A549 (cell line): ENCODE measurements at regions of chr7 and their contacts with region 1.

Region 1: GRCh38 chr7:43700059-43700501 is 29.2 kb downstream of the COA1 start:
- DNase-seq: peak; percentile 28 to 56
- ATAC-seq: peak; percentile 78 to 80; a peak in 4 of 6 replicates
- H3K4me3 ChIP-seq: no peak overlapping the region
- H3K27ac ChIP-seq: no peak overlapping the region
- H3K4me1 ChIP-seq: peaks cover 42% of the 10 kb centered on the region
- CTCF ChIP-seq: peak; percentile 96
- EP300 ChIP-seq: no peak
- POLR2A ChIP-seq: no peak
- RAD21 ChIP-seq: peak; percentile 93 to 96

Region 2: GRCh38 chr7:43625453-43625852 is 74.6 kb before region 1 on chr7:
- CTCF ChIA-PET with region 1: interaction called, 26 read pairs
- POLR2A ChIA-PET with region 1: no interaction called
- DNase-seq: no peak
- ATAC-seq: peak in 1 of 2 experiments; percentile 16; a peak in 2 of 6 replicates
- H3K4me3 ChIP-seq: no peak overlapping the region
- H3K27ac ChIP-seq: no peak overlapping the region
- H3K4me1 ChIP-seq: peaks cover 4% of the 10 kb centered on the region; the same call in 2 of the 3 replicates
- CTCF ChIP-seq: no peak
- EP300 ChIP-seq: no peak
- POLR2A ChIP-seq: no peak
- RAD21 ChIP-seq: no peak

Region 3: GRCh38 chr7:43647673-43648472 is 52.2 kb before region 1 on chr7:
- CTCF ChIA-PET with region 1: interaction called, 17 read pairs
- POLR2A ChIA-PET with region 1: no interaction called
- DNase-seq: peak; percentile 66 to 83
- ATAC-seq: peak; percentile 85 to 86
- H3K4me3 ChIP-seq: no peak overlapping the region
- H3K27ac ChIP-seq: peak overlapping the region; percentile 69 to 92
- H3K4me1 ChIP-seq: peaks cover 62% of the 10 kb centered on the region
- CTCF ChIP-seq: no peak
- EP300 ChIP-seq: peak; percentile 21 to 60; a peak in 1 of 5 replicates
- POLR2A ChIP-seq: no peak
- RAD21 ChIP-seq: peak in 1 of 2 experiments; percentile 34; a peak in 2 of 5 replicates

Region 4: DNA sequence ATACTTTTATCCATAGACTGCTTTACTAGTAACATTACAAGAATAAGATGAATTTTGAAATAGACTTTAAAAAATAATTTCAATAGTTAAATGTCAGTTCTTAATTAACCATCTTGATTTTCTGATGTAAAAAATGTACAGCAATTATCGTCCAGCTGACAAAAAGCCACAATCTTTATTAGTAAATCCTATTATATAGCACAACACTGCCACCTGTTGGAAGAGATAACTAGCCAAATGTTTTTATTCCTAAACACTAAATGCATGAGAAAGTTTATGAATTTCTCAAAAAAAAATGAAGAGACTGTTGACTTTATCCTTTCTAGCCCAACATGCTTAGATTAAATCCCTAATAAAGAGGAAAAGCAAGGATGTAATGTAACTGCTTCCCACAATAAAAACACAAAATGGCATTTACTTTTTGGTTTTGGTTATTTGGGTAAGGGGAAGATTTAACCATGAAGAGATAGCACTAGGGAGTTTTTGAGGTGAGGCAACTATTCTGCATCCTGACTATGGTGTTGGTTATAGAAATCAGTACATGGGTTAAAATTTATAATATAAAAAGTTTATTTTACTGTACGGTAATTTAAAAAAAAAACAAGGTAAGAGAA is 21.2 kb after region 1 on chr7:
- CTCF ChIA-PET with region 1: interaction called, 18 read pairs
- POLR2A ChIA-PET with region 1: no interaction called
- DNase-seq: peak; percentile 23 to 48
- ATAC-seq: no peak; a peak in 1 of 6 replicates
- H3K4me3 ChIP-seq: no peak overlapping the region
- H3K27ac ChIP-seq: no peak overlapping the region
- H3K4me1 ChIP-seq: peaks cover 8% of the 10 kb centered on the region
- CTCF ChIP-seq: peak; percentile 88
- EP300 ChIP-seq: no peak
- POLR2A ChIP-seq: no peak
- RAD21 ChIP-seq: peak; percentile 71 to 83